CD4-positive, alpha-beta T cell (primary cell): ENCODE measurements at regions of chr10 and their contacts with region 1.

Region 1: DNA sequence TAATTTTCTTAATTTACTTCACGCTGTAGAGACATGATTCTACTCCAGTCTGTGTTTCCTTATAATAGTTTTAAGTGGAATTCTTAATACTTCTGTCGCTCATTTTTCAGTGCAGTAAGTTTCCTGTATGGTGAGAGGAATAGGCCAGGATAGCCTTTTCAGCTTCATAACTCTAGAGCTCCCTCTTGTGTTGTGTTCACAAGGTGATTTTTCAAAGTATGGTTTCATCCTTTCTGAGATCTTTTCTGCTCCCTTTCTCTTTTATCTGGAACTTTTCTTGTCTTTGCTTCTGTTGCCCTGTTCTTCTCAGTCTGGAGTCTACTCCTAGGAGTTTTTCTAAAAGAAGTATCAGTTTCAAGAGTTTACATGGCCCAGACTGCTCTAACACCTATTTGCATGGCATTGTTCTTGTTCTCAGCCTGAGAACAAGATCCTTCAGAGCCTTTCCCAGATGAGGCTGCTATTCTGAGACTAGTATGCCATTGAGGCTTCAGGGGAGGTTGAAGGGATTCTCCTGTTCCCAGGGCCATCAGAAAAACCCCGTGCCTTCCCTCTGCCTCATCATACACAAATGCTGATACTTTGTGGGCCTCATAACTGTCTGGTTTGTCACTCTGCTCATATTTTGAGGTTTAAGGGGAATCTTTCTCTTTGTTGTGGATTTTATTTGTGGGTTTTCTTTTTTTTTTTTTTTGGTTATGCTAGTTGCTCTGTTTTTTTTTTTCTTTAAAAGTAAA is 21.8 kb downstream of the NET1 start:
- DNase-seq: peak in 3 of 14 experiments; percentile 61 to 66 (median 63)
- ATAC-seq: peak; percentile 83
- H3K4me3 ChIP-seq: no peak overlapping the region
- H3K4me3 Mint-ChIP-seq: no peak overlapping the region
- H3K27ac ChIP-seq: no peak overlapping the region
- H3K27ac Mint-ChIP-seq: no peak overlapping the region
- H3K4me1 ChIP-seq: peaks cover 4% of the 10 kb centered on the region
- H3K4me1 Mint-ChIP-seq: peaks cover 15% of the 10 kb centered on the region
- H3K27me3 ChIP-seq: no peaks in the 10 kb centered on the region
- H3K27me3 Mint-ChIP-seq: no peaks in the 10 kb centered on the region
- CTCF ChIP-seq: peak; percentile 74

Region 2: DNA sequence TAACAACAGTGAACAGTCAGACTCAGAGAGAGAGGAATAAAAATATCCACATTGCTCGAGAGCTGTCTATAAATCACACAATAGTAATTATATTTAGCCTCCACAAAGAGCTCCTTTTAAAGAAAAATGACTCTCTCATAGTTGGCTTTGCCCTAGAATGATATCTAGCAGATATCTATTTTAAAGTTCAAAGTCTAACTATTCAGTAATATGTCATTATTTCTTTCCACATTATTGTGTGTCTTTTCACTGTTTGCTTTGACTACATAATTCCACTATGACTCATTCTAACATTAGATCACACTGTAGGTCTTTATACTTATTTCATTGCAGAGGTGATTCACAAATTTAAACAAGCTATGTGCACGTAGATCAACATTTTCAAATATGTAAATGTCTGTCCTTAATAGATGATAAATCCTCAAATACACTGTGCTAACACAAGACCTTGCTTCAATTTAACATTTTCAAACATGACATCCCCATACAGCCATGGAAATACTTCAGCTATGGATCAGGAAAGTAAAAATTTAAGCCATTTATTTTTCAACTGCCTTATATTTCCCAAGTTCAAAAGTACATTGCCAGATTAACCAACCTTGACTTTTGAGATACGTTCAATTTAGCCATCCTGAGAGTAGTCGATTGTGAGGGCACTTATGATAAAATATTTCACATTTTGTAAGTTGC is 708.1 kb before region 1 on chr10:
- CTCF ChIA-PET with region 1: no interaction called
- POLR2A ChIA-PET with region 1: no interaction called
- intact Hi-C with region 1: no loop called
- DNase-seq: no peak
- ATAC-seq: no peak
- H3K4me3 ChIP-seq: no peak overlapping the region
- H3K4me3 Mint-ChIP-seq: no peak overlapping the region
- H3K27ac ChIP-seq: no peak overlapping the region
- H3K27ac Mint-ChIP-seq: no peak overlapping the region
- H3K4me1 ChIP-seq: no peaks in the 10 kb centered on the region
- H3K4me1 Mint-ChIP-seq: no peaks in the 10 kb centered on the region
- H3K27me3 ChIP-seq: no peaks in the 10 kb centered on the region
- H3K27me3 Mint-ChIP-seq: peaks cover 13% of the 10 kb centered on the region
- CTCF ChIP-seq: no peak

Region 3: DNA sequence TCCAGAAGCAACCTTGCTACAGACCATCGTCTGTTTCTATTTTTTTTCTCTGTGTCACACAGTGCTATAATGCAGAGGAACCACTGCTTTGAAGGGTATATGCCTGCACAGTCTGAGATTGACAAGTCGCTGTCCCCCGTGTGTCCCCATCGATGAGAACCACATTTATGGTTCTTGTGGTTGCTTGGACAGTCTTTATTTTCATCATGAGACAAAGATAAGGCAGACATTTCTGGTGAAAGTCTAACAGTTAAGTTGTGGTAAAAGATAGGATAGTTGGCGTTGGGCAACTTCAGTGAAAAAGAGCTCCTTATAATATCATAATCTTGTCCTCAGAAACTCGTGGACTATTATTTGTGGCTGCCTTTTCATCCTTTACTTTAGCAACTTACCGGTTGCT is 614.5 kb before region 1 on chr10:
- CTCF ChIA-PET with region 1: interaction called, 6 read pairs
- POLR2A ChIA-PET with region 1: interaction called, 3 read pairs
- intact Hi-C with region 1: loop called in 1 of 2 experiments (anchors 5 kb)
- DNase-seq: no peak
- ATAC-seq: no peak
- H3K4me3 ChIP-seq: no peak overlapping the region
- H3K4me3 Mint-ChIP-seq: no peak overlapping the region
- H3K27ac ChIP-seq: no peak overlapping the region
- H3K27ac Mint-ChIP-seq: no peak overlapping the region
- H3K4me1 ChIP-seq: peaks cover 3% of the 10 kb centered on the region
- H3K4me1 Mint-ChIP-seq: no peaks in the 10 kb centered on the region
- H3K27me3 ChIP-seq: peaks cover 0 to 4% of the 10 kb centered on the region in 2 experiments
- H3K27me3 Mint-ChIP-seq: peaks cover 23% of the 10 kb centered on the region
- CTCF ChIP-seq: no peak

Region 4: DNA sequence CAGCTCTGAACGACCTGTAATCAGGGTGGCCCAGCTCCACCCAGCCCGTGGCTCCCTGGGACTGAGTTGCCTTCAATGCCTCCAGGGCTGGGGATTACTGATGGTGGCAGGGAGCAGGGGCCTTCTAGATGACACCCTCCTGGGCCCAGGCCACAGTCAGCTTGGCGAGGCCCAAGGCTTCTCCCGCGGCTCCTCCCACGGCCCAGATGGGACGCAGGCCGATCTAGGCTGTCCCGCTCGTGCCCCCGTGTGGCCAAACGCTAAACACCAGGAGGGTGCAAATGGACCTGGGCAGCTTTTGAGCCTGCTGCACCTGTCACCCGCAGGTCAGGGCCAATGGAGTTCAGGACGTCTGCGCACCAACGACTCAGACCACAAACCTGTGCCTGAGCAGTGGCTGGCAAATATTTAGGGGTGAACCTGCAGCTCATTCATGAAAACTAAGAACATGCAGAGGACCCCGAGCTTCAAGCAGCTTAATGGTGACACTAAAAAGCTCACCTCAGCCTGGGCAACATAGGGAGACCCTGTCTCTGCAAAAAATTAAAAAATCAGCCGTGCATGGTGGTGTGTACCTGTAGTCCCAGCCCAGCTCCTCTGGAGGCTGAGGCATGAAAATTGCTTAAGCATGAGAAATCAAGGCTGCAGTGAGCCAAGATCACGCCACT is 189.0 kb after region 1 on chr10:
- CTCF ChIA-PET with region 1: interaction called, 12 read pairs
- POLR2A ChIA-PET with region 1: no interaction called
- intact Hi-C with region 1: no loop called
- DNase-seq: peak; percentile 66 to 89 (median 78)
- ATAC-seq: peak; percentile 100
- H3K4me3 ChIP-seq: no peak overlapping the region
- H3K4me3 Mint-ChIP-seq: no peak overlapping the region
- H3K27ac ChIP-seq: no peak overlapping the region
- H3K27ac Mint-ChIP-seq: no peak overlapping the region
- H3K4me1 ChIP-seq: peaks cover 6% of the 10 kb centered on the region
- H3K4me1 Mint-ChIP-seq: no peaks in the 10 kb centered on the region
- H3K27me3 ChIP-seq: no peaks in the 10 kb centered on the region
- H3K27me3 Mint-ChIP-seq: no peaks in the 10 kb centered on the region
- CTCF ChIP-seq: peak; percentile 89